BJ (cell line): ENCODE measurements at regions of chr17 and their contacts with region 1.

Region 1: DNA sequence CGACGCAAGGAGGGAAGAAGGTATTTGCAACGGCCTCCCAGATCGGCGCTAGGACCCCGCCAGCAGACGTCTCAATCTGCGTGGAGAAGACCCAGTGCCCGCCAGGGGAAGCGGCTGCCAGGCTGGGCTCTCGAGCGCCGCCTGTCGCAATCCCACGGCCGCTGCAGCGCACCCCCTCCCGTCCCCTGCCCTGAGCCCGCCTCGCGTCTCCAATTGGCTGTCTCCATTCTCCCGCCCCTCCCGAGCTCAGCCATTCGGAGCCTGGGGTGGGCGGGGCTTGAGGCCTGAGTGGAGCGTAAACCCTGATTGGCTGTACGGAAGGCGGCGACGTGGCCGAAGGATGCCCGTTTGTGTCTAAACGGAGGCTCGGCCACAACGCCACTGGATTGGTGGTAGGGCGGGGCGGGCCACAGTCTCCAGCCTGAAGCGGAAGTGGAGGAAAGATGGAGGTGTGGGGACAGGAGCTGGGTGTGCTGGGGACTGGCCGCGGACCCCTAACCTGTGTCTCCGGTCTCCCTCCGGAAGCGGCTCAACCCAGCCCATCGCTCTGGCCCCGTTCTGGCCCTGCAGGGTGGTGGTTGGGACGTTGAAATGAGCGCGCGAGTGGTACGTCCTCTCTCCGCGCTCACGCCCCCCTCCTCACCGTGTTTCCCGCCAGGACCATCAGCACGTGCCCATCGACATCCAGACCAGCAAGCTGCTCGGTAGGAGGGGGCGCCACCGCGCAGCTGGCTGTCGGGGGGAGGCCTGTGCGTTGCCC is at the start of gene CDK5RAP3:
- DNase-seq: peak; percentile 91
- H3K4me3 ChIP-seq: peak within 1 kb of the TSS; percentile 72
- H3K27me3 ChIP-seq: no peaks in the 10 kb centered on the region
- CTCF ChIP-seq: peak; percentile 94
- polyA plus RNA-seq, gene CDK5RAP3: 76.6 and 98.1 TPM in 2 replicates

Region 2: GRCh38 chr17:47757386-47757785 is 213.5 kb before region 1 on chr17:
- CTCF ChIA-PET with region 1: no interaction called
- POLR2A ChIA-PET with region 1: no interaction called
- DNase-seq: no peak
- H3K4me3 ChIP-seq: no peak overlapping the region
- H3K27me3 ChIP-seq: peaks cover 5% of the 10 kb centered on the region; the same call in 1 of the 2 replicates
- CTCF ChIP-seq: no peak

Region 3: GRCh38 chr17:47840740-47841603 is 129.9 kb before region 1 on chr17 and contains the start of gene SCRN2:
- CTCF ChIA-PET with region 1: interaction called, 22 read pairs
- POLR2A ChIA-PET with region 1: no interaction called
- DNase-seq: no peak
- H3K4me3 ChIP-seq: peak within 1 kb of the TSS; percentile 63
- H3K27me3 ChIP-seq: peaks cover 2% of the 10 kb centered on the region
- CTCF ChIP-seq: peak; percentile 98
- polyA plus RNA-seq, gene SCRN2: 18.3 and 41.1 TPM in 2 replicates

Region 4: GRCh38 chr17:47941236-47941994 is 29.5 kb before region 1 on chr17 and contains the start of gene PNPO:
- CTCF ChIA-PET with region 1: interaction called, 380 read pairs
- POLR2A ChIA-PET with region 1: interaction called, 5 read pairs
- DNase-seq: peak; percentile 93
- H3K4me3 ChIP-seq: peak within 1 kb of the TSS; percentile 87
- H3K27me3 ChIP-seq: no peaks in the 10 kb centered on the region
- CTCF ChIP-seq: 0 out of 2 replicates have a peak, but pooled peaks have one; percentile 7
- polyA plus RNA-seq, gene PNPO: 15.9 and 19.6 TPM in 2 replicates

Region 5: GRCh38 chr17:48011405-48012150 is 40.7 kb after region 1 on chr17:
- CTCF ChIA-PET with region 1: interaction called, 575 read pairs
- POLR2A ChIA-PET with region 1: no interaction called
- DNase-seq: no peak
- H3K4me3 ChIP-seq: peak overlapping the region; percentile 40
- H3K27me3 ChIP-seq: no peaks in the 10 kb centered on the region; the same call in 1 of the 2 replicates
- CTCF ChIP-seq: peak; percentile 74

Region 6: DNA sequence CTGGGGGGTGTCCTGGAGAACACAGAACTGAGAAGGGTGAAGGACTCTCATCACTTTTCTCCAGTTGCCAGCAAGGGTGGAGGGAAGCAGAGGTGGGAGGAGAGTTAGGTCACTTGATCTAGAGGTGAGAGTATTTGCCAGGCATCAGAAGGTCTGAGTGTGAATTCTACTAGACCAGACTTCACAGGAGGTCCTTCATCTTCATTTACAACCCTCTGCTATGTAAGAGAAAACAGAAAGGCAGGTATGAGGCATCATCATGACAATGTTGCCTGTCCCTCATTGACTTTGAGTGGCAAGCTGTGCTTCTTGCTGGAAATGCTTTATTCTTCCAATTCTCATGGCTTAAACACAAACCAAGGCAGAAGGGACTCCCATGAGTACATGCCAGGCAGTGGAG is 1115.8 kb after region 1 on chr17:
- CTCF ChIA-PET with region 1: no interaction called
- POLR2A ChIA-PET with region 1: interaction called, 18 read pairs
- DNase-seq: no peak
- H3K4me3 ChIP-seq: no peak overlapping the region
- H3K27me3 ChIP-seq: peaks cover 3% of the 10 kb centered on the region
- CTCF ChIP-seq: no peak